ENCODE measurements at regions of chr11 and their contacts with region 1.

Region 1: GRCh38 chr11:66842896-66843775 is at the start of gene RCE1:
- DNase-seq: peak; percentile 91
- H3K4me3 Mint-ChIP-seq: peak within 1 kb of the TSS; percentile 87
- H3K27ac Mint-ChIP-seq: peak within 1 kb of the TSS; percentile 90
- H3K4me1 Mint-ChIP-seq: peaks cover 47% of the 10 kb centered on the region
- H3K27me3 Mint-ChIP-seq: no peaks in the 10 kb centered on the region
- total RNA-seq, gene RCE1: 19.3 to 20.6 TPM

Region 2: GRCh38 chr11:66744485-66745340 is 98.4 kb before region 1 on chr11:
- CTCF ChIA-PET with region 1: no interaction called
- intact Hi-C with region 1: loop called (anchors 1 kb)
- DNase-seq: peak; percentile 85
- H3K4me3 Mint-ChIP-seq: peak overlapping the region; percentile 95
- H3K27ac Mint-ChIP-seq: peak overlapping the region; percentile 50
- H3K4me1 Mint-ChIP-seq: peaks cover 1% of the 10 kb centered on the region
- H3K27me3 Mint-ChIP-seq: no peaks in the 10 kb centered on the region

Region 3: DNA sequence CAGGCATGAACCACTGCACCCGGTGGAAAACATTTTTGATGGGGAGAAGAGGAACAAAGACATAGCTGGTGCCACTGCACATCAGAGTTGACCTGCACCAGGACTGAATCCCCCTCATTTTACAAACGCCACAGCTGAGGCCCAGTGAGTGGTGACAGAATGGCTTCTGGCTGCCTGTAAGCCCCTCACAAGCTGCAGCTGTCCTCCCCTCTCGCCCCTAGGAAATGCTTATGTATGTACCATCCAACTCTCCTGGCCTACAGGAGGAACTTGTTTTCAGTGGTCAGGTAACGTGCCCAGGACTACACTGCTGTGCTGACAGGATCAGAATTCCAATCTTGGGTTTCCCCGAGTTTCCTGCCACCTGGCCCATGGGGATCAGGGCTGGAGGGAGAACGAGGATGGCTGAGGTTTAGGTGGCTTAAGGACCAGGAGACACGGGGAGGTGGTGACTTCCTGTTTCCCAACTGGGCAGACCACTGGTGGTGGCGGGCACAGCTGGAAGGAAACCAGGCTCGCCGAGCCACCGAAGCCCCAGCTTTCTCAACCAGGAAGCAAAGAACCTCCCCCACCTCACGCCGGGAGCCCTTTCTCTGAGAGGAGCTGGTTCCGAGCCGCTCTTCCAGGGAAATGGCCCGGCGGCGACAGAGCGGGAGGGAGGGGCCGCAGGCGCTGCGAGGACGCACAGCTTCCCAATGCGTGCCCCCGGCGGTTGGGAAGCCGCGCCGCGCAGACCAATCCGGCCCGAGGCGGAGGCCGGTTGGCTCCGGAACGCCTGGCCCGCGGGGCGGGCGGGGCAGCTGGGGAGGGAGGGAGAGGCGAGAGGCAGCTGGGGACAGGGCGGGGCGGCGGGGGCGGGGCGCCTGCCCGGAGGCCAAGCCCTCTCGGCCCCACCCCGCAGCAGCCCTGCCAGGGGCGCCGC is 12.7 kb after region 1 on chr11:
- CTCF ChIA-PET with region 1: interaction called, 3 read pairs
- intact Hi-C with region 1: loop called (anchors 1 kb)
- DNase-seq: peak; percentile 89
- H3K4me3 Mint-ChIP-seq: peak overlapping the region; percentile 87
- H3K27ac Mint-ChIP-seq: peak overlapping the region; percentile 30
- H3K4me1 Mint-ChIP-seq: peaks cover 11% of the 10 kb centered on the region
- H3K27me3 Mint-ChIP-seq: no peaks in the 10 kb centered on the region

Region 4: DNA sequence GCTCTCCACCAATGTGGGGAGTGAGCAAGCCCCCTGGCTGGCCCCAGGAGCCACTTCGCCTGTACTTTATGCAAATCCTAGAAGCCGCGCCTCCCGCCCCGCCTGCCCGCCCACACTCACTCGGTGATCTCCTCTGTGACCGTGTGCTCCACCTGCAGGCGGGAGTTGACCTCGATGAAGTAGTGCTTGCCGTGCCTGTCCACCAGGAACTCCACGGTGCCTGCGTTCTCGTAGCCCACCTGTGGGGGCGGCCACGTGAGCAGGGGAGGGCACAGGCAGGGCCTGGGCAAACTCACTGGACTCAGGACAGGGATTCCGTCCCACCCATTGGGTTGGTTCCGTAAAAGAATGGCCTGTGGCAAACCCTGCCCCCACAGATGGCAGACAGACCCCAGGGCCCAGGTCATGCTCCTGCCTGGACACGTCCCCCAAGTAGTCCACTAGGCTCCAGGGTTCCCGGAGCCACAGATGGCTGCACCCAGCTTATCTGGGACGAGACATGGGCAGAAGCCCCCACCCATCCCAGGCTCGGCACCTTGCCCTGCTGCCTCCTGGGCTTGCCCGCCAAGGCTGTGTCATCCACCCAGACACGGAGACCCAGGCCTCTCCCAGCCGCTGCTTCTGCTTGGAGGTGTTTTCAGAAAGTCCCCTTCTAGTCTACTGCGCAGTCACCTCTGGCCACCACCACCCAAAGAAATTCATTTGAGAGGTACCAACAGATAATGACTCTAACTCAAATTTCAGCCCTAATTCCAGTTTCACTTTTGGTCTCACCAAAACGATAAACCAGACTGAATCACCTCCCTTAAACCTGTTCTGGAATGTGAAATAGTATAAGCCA is 25.8 kb after region 1 on chr11:
- CTCF ChIA-PET with region 1: no interaction called
- intact Hi-C with region 1: loop called (anchors 1 kb)
- DNase-seq: peak; percentile 91
- H3K4me3 Mint-ChIP-seq: no peak overlapping the region
- H3K27ac Mint-ChIP-seq: no peak overlapping the region
- H3K4me1 Mint-ChIP-seq: peaks cover 7% of the 10 kb centered on the region
- H3K27me3 Mint-ChIP-seq: no peaks in the 10 kb centered on the region

Region 5: GRCh38 chr11:66883016-66883968 is 40.2 kb after region 1 on chr11:
- CTCF ChIA-PET with region 1: interaction called, 4 read pairs
- intact Hi-C with region 1: loop called (anchors 5 kb)
- DNase-seq: peak; percentile 79
- H3K4me3 Mint-ChIP-seq: no peak overlapping the region
- H3K27ac Mint-ChIP-seq: no peak overlapping the region
- H3K4me1 Mint-ChIP-seq: peaks cover 16% of the 10 kb centered on the region
- H3K27me3 Mint-ChIP-seq: no peaks in the 10 kb centered on the region

Region 6: GRCh38 chr11:67118801-67119584 is 275.9 kb after region 1 on chr11 and contains the start of gene KDM2A:
- CTCF ChIA-PET with region 1: no interaction called
- intact Hi-C with region 1: loop called (anchors 1 kb)
- DNase-seq: peak; percentile 99
- H3K4me3 Mint-ChIP-seq: peak within 1 kb of the TSS; percentile 97
- H3K27ac Mint-ChIP-seq: peak within 1 kb of the TSS; percentile 92
- H3K4me1 Mint-ChIP-seq: peaks cover 41% of the 10 kb centered on the region
- H3K27me3 Mint-ChIP-seq: no peaks in the 10 kb centered on the region
- total RNA-seq, gene KDM2A: 57.7 to 58.8 TPM

Region 7: GRCh38 chr11:67195971-67196456 is 352.9 kb after region 1 on chr11:
- CTCF ChIA-PET with region 1: no interaction called
- intact Hi-C with region 1: no loop called
- DNase-seq: no peak
- H3K4me3 Mint-ChIP-seq: no peak overlapping the region
- H3K27ac Mint-ChIP-seq: peak overlapping the region; percentile 4
- H3K4me1 Mint-ChIP-seq: peaks cover 3% of the 10 kb centered on the region
- H3K27me3 Mint-ChIP-seq: no peaks in the 10 kb centered on the region

Measured in activated naive CD4-positive, alpha-beta T cell treated with anti-CD3 and anti-CD28 coated beads for 36 hours (primary cell).